AG04449 (cell line): ENCODE measurements at regions of chr10 and their contacts with region 1.

Region 1: DNA sequence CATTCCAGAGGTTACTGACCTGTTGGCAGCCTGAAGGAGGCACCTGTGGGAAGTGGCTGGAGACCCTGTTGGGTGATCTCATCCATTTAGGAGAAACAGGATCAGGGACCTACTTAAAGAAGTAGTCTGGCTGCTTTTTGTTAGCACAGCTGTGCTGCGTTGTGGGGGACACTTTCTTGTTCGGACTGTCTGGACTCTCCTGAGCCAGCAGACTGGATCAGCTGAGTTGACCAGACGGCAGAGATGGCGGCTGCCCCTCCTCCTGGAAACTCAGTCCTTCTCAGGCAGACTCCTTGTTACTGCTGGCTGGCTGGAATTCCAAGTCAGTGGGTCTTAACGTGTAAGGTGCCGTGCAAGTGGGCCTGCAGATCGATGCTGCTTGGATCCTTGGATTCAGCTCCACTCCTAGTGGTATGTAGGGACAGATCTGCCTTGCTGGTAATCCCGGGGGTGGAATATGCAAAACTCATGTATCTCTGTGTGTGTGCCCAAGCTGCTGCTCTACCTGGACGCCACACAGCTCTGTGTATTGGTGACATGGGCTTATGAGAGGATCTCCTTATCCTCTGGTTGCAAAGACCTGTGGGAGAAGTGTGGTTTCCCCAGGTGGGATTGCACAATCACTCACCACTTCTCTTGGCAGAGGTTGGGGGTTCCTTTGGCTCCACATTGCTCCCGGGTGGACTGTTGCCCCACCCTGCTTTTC is 87.3 kb downstream of the CCSER2 start:
- DNase-seq: no peak
- H3K4me3 ChIP-seq: no peak overlapping the region
- CTCF ChIP-seq: no peak

Region 2: DNA sequence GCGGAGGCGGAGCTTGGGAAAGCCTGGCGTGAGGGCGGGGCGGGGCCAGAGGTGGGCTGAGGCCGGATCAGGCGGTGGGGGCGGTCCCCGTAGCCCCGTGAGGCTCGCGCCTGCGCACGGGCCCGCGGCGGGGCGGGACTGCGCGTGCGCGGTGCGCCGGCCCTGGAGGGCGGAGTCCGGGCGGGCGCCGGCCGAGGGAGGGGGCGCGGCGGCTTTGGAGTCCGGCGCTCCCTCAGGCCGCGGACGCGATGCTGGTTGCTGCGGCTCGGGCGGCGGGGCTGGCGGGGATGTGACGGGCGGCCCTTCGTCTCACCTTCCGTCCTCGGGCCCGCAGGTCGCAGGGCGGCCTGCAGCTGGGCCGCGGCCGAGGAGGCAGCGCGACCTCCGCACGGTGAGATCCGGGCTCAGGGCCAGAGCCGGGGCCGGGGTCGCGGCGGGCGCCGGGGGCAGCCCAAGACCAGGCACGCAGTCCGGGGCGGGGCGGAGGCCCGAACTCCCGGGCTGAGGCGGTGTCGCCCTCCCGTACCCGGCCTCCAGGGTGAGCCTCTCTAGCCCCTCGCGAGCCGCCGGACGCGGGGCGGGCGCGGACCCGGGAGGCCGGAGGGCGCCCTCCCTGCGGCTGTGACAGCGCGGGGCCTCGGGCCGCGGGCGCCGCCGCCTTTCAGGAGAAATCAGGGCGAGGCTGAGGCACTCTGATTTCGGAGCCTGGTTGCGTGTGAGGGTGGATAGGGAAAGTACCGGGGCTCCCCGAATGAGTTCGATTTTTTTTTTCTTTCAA is 87.1 kb before region 1 on chr10 and contains the start of gene CCSER2:
- CTCF ChIA-PET with region 1: no interaction called
- POLR2A ChIA-PET with region 1: no interaction called
- DNase-seq: no peak
- H3K4me3 ChIP-seq: peak within 1 kb of the TSS; percentile 67
- CTCF ChIP-seq: peak; percentile 9

Region 3: DNA sequence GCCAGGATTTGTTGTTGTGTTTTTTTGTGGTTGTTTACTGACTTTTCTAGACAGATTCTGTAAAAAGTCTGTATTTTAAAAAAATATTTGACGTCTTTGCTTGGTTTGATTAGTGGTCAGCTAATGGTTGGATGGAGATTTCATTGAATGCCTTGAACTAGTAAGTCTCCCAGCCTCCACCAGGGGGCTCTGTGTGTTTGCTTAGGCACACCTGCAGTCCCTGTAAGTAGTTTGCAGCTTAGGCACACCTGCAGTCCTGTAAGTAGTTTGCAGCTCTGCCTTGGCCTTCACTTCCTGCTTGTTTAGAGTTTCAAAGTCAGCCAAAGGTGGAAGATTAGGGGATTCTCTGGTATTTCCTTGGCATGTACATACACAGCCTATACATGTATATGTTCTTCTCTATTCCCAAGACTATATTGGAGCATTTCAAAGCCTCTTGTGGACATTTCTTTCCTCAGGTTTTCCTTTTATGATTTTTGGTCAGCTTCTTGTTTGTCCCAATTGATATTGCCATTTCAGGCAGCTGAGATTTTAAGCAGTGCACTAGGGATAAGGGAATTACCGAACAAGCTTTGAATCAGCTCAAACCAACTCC is 14.3 kb after region 1 on chr10:
- CTCF ChIA-PET with region 1: interaction called, 13 read pairs
- POLR2A ChIA-PET with region 1: no interaction called
- DNase-seq: no peak
- H3K4me3 ChIP-seq: no peak overlapping the region
- CTCF ChIP-seq: peak; percentile 63